Endothelial cell of umbilical vein (primary cell): ENCODE measurements at regions of chr18 and their contacts with region 1.

Region 1: DNA sequence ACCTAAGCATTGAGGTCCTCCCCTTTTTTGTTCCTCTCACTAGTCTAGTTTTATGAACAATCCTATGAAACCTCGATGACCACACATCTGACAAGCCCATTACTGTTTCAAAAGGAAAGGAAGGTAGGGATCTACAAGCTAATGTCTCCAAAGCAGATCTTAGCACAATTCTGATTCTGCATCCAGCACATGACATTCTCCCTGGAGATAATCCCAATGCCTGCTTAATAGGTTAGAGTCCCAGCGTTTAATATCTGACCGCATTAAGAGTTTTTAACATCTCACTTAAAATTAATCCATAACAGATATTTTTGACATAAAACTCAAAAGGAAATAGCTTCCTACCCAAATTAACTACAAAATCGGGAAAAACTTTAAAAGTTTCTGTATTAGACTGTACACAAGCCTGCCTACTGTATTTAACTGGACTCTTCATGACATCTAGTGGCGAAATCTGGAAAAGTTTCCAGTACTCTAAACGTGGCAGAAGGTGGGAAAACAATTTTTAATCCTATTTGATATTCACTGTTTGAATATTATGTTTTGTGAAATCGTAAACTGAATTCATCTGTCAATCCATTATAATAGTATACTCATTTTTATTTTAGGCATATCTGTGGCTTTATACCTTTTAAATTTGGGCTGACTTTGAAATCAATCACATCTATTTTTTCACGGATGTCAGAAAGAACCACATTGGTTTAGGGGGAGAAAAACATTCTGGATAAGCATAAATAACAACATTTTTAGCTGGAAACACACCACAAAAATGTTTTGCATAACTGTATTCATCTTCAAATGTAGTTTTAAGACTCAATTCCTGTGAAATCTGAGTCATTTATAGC is 62.4 kb downstream of the TXNL1 start:
- DNase-seq: peak; percentile 82
- H3K4me3 ChIP-seq: no peak overlapping the region
- H3K27ac ChIP-seq: no peak overlapping the region
- H3K4me1 ChIP-seq: peaks cover 25% of the 10 kb centered on the region
- H3K27me3 ChIP-seq: no peaks in the 10 kb centered on the region
- CTCF ChIP-seq: peak; percentile 29 to 33
- POLR2A ChIP-seq: no peak

Region 2: DNA sequence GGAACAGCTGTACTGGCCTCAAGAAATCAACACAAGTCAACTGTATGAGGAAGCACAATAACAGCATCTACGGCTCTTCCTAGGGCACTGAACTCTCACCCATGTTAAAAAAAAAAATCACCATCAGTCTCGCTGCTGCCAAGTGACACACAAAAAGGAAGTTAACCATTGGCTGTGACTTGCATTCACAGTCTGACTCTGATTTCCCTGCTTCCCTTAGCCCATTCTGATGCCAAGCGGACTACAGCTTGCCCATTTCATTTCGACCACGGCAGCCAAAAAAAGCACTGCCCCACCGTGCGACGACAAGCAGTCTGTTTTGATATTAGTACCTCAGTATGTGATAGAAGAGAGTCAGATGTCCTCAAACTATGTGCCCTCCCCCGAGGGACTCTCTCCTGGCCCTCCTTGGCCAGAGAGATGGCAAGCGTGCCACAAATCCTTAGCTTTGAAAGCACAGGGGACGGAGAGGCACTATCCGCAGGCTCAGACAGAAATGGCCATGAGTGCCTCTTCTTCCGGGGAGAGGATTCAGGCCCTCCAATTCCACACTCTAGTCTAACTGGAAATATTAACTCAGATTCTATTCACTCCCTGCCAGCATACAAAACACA is 1238.0 kb before region 1 on chr18:
- CTCF ChIA-PET with region 1: interaction called, 11 read pairs
- POLR2A ChIA-PET with region 1: no interaction called
- dilution Hi-C with region 1: no loop called
- intact Hi-C with region 1: loop called (anchors 5 kb)
- DNase-seq: peak; percentile 92
- H3K4me3 ChIP-seq: no peak overlapping the region
- H3K27ac ChIP-seq: peak overlapping the region; percentile 83
- H3K4me1 ChIP-seq: peaks cover 45% of the 10 kb centered on the region
- H3K27me3 ChIP-seq: no peaks in the 10 kb centered on the region
- CTCF ChIP-seq: no peak
- POLR2A ChIP-seq: no peak

Region 3: DNA sequence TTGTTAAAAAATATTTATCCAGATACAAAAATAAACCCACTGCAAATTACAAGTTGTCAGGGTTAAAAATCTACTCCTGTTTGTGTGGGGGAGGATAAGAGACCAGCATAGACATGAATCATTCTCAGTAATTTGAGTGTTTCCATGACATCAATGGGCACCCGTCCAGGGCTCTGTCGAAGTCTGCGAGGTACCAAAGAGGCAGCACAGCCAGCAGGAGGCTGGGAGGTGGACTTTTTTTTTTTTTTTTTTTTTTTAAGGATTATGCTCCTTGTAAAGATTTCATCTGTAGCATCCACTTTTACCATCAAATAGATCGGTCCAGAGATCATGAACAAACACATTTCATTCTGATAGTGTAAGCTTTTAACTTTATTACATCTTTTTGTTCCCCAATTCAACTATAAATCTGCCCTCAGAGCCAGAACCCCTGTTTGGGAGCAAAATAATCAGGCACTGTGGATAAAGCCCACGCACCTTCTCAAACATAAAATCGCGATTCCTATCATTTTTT is 1170.1 kb before region 1 on chr18:
- CTCF ChIA-PET with region 1: no interaction called
- POLR2A ChIA-PET with region 1: no interaction called
- dilution Hi-C with region 1: no loop called
- intact Hi-C with region 1: loop called (anchors 1 kb)
- DNase-seq: peak; percentile 97
- H3K4me3 ChIP-seq: no peak overlapping the region
- H3K27ac ChIP-seq: peak overlapping the region; percentile 73
- H3K4me1 ChIP-seq: peaks cover 48% of the 10 kb centered on the region
- H3K27me3 ChIP-seq: no peaks in the 10 kb centered on the region
- CTCF ChIP-seq: peak in 1 of 2 donors; percentile 20
- POLR2A ChIP-seq: no peak

Region 4: DNA sequence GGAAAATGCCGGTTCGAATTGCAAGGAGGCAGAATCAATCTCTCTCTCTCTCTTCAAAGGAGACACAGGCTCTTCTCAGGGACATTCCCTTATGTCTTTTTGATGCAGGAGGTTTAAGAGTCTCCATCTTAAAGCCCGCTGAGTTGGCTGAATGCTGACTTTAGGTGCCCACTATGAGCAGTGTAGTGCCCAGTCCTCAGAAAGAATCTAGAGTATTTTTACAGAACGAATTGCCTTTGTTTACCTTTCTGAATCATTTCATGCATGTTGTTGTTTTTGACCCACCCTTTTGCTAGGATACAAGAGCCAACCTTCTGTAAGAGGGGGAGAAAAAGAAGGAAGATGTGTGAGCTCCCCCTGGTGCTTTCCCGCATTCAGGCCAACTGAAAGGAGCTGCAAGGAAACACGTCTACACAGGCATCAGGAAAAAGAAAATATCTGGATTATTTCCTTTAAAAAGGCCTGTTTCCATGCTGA is 794.5 kb before region 1 on chr18:
- CTCF ChIA-PET with region 1: interaction called, 14 read pairs
- POLR2A ChIA-PET with region 1: no interaction called
- dilution Hi-C with region 1: no loop called
- intact Hi-C with region 1: loop called (anchors 1 kb)
- DNase-seq: peak; percentile 90
- H3K4me3 ChIP-seq: no peak overlapping the region
- H3K27ac ChIP-seq: peak overlapping the region; percentile 47
- H3K4me1 ChIP-seq: peaks cover 27% of the 10 kb centered on the region
- H3K27me3 ChIP-seq: no peaks in the 10 kb centered on the region
- CTCF ChIP-seq: peak; percentile 75 to 85
- POLR2A ChIP-seq: no peak

Region 5: DNA sequence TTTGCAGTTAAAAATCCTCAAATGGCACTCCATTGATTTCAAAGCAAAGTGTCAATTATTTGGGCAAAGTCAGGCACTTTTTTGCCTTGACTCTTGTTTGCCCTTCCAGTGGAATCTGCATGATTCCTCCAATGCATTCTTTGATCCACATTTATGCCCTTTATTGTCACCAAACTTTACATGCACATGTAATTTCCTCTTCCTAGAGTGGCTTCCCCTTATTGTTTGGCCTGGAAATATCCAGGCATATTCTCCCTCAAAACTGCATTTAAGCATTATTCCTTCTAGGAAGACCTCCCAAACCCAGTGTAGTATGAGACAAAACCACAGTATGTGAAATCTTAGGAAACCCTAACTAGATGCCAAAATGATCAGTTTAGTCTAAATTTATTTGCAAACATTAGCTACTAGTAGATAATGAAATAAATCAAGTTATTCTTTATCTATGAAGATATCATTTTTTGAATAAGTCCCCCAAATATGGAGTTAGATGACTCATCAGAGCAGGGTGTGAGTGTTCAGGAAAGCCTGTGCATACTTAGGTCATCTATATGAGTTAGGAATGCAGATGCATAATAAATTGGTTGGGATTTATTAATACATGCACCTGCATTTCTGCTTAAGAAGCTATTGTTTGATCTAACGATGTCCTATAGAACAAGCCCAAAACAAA is 554.8 kb before region 1 on chr18:
- CTCF ChIA-PET with region 1: interaction called, 3 read pairs
- POLR2A ChIA-PET with region 1: no interaction called
- dilution Hi-C with region 1: no loop called
- intact Hi-C with region 1: loop called (anchors 1 kb)
- DNase-seq: peak; percentile 86
- H3K4me3 ChIP-seq: peak overlapping the region in 1 of 3 experiments; percentile 3
- H3K27ac ChIP-seq: peak overlapping the region; percentile 93
- H3K4me1 ChIP-seq: peaks cover 35% of the 10 kb centered on the region
- H3K27me3 ChIP-seq: no peaks in the 10 kb centered on the region
- CTCF ChIP-seq: no peak
- POLR2A ChIP-seq: no peak

Region 6: DNA sequence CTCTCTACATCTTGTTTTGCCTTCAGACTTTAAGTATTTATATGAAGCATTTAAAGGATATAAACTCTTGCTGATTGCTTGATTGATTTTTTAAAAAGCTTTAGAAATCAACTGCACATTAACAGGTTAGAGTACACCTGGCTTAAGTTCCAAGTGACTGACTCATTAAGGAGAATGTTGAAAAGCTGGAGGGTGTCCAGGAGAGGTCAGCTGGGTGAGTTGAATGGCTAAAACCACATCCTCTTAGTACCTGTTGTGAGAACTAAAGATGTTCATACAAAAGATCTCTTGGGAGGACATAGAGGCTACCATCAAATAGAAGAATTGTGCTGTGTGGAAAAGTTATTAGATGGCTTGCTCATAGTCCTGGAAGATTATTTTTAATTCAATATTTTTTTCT is 144.5 kb before region 1 on chr18:
- CTCF ChIA-PET with region 1: no interaction called
- POLR2A ChIA-PET with region 1: no interaction called
- dilution Hi-C with region 1: no loop called
- intact Hi-C with region 1: no loop called
- DNase-seq: peak; percentile 16
- H3K4me3 ChIP-seq: no peak overlapping the region
- H3K27ac ChIP-seq: no peak overlapping the region
- H3K4me1 ChIP-seq: no peaks in the 10 kb centered on the region
- H3K27me3 ChIP-seq: no peaks in the 10 kb centered on the region
- CTCF ChIP-seq: no peak
- POLR2A ChIP-seq: no peak

Region 7: DNA sequence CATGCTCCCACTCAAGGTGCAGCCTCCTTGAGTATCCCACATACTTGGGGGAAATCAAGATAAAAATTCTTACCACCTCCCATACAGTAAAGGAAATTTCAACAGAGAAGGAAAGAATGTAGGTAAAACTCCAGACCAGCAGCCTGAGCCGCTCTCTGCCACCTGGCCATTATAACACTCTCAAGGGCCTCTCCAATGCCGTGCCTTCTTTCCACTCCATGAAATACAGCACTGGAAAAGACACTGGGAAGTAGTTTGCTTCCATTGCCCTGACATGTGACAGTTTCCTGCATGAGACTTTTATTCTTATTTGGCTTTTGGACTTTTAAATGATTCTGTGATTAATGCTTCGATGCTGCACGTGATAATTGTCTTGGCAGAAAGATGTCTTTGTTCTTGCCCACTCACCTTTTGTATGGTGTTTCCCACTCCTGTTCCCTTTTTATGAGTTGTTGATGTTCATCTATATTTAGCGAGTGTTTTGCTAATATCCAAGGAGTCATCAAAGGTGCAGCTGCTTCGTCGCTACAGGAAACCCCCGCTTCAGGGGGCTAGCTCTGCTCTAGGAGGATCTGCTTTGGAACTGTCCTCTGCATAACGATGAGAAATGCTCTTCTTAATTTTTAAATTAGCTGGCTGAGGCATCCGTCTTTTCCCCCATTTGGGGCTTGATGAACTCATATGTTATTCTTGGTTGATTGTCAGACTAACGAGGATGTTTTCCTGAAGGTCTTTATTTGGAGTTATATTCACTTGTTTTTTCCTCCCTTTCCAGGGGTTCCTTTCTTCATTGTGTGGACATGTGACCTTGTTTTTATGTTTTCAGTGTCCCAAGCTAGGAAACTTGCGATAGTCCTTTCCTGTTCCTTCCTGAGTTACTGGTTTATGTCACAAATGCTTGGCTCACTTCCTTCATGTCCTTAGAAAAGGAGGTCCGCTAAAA is 117.0 kb before region 1 on chr18:
- CTCF ChIA-PET with region 1: no interaction called
- POLR2A ChIA-PET with region 1: no interaction called
- dilution Hi-C with region 1: no loop called
- intact Hi-C with region 1: loop called (anchors 1 kb)
- DNase-seq: peak; percentile 95
- H3K4me3 ChIP-seq: no peak overlapping the region
- H3K27ac ChIP-seq: peak overlapping the region; percentile 65
- H3K4me1 ChIP-seq: peaks cover 28% of the 10 kb centered on the region
- H3K27me3 ChIP-seq: no peaks in the 10 kb centered on the region
- CTCF ChIP-seq: no peak
- POLR2A ChIP-seq: no peak

Region 8: DNA sequence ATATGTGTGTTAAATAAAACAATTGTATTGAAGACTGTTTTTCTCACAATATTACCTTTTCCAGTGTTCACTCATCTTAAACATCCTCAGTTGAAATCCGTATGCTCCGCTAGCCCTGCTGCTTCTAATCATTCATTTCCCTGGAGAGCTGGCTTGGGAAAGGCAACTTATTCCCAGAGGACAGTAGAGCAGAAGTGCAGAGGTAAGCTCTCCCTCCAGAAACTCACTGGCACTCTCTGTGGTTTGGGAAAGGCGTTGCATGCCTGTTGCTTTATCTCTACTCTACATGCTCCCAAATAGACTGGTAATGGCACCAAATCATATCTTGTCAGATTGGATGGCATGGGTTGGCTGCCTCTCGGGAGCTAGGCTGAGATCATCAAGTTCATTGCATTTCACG is 453.7 kb after region 1 on chr18:
- CTCF ChIA-PET with region 1: no interaction called
- POLR2A ChIA-PET with region 1: no interaction called
- dilution Hi-C with region 1: no loop called
- intact Hi-C with region 1: no loop called
- DNase-seq: no peak
- H3K4me3 ChIP-seq: no peak overlapping the region
- H3K27ac ChIP-seq: no peak overlapping the region
- H3K4me1 ChIP-seq: no peaks in the 10 kb centered on the region
- H3K27me3 ChIP-seq: no peaks in the 10 kb centered on the region
- CTCF ChIP-seq: no peak
- POLR2A ChIP-seq: no peak